Ovary (tissue), 10 donors: ENCODE measurements at regions of chr1 and their contacts with region 1.

Region 1: DNA sequence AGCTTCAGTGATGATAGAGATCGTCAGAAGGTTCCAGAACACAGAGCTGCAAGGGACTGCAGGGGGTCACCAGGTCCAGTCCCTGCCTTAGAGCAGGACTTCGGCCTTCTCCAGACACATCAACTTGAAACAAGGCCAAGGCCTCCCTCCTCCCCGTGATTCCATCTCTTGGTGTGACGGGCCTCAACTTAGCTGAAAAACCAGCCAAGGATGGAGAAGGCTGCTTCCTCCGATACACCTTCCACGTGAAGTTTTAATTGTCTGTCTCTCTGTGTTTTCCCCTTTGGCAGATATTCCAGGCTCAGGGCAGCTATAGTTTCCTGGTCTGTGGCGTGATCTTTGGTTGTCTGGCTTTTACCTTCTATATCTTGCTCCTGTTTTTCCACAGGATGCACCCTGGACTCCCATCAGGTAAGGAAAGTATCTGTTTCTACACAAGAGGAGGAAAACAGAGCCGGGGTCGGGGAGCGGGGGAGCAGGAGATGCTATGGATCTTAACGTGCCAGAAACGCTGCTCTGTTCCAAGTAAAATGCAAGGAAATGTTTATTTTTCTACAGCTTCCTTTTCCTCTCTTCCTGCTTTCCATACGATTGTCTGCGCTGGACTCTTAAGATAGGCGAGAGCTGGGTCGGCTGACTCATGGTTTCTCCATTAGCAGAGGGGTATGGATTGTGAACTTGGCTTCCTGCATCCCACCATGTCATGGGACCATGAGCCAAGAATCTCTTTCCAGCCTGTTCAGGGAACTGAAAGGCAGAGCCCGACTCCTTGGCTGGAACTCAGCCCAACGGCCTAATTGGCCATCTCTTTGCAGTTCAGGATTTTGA is 32.8 kb downstream of the ELK4 start:
- DNase-seq: peak; percentile 77 to 87 (median 83)
- H3K4me3 ChIP-seq: no peak overlapping the region
- H3K27ac ChIP-seq: peak overlapping the region in 1 of 2 donors; percentile 51
- H3K4me1 ChIP-seq: no peaks in the 10 kb centered on the region
- H3K27me3 ChIP-seq: no peaks in the 10 kb centered on the region
- CTCF ChIP-seq: no peak
- EP300 ChIP-seq: no peak
- POLR2A ChIP-seq: no peak

Region 2: GRCh38 chr1:205645519-205645918 is 46.5 kb after region 1 on chr1:
- intact Hi-C with region 1: loop called in 1 of 4 experiments (anchors 5 kb)
- DNase-seq: no peak
- H3K4me3 ChIP-seq: no peak overlapping the region
- H3K27ac ChIP-seq: no peak overlapping the region
- H3K4me1 ChIP-seq: no peaks in the 10 kb centered on the region
- H3K27me3 ChIP-seq: no peaks in the 10 kb centered on the region
- CTCF ChIP-seq: no peak
- EP300 ChIP-seq: no peak
- POLR2A ChIP-seq: no peak